Activated CD4-positive, alpha-beta T cell treated with anti-CD3 and anti-CD28 coated beads for 36 hours (primary cell): ENCODE measurements at regions of chr7 and their contacts with region 1.

Region 1: GRCh38 chr7:21427182-21427870 is 557 bp upstream of the SP4 start:
- DNase-seq: peak; percentile 99
- ATAC-seq: peak; percentile 80
- H3K4me3 Mint-ChIP-seq: peak overlapping the region; percentile 99
- H3K27ac Mint-ChIP-seq: peak overlapping the region; percentile 100
- H3K4me1 Mint-ChIP-seq: peaks cover 38% of the 10 kb centered on the region
- H3K27me3 Mint-ChIP-seq: no peaks in the 10 kb centered on the region

Region 2: GRCh38 chr7:19708397-19709248 is 1718.7 kb before region 1 on chr7 and contains the start of gene POLR1F:
- CTCF ChIA-PET with region 1: no interaction called
- POLR2A ChIA-PET with region 1: no interaction called
- intact Hi-C with region 1: loop called in 1 of 2 experiments (anchors 5 kb)
- DNase-seq: peak; percentile 96
- ATAC-seq: peak; percentile 96
- H3K4me3 Mint-ChIP-seq: peak within 1 kb of the TSS; percentile 89
- H3K27ac Mint-ChIP-seq: peak within 1 kb of the TSS; percentile 90
- H3K4me1 Mint-ChIP-seq: peaks cover 41% of the 10 kb centered on the region
- H3K27me3 Mint-ChIP-seq: no peaks in the 10 kb centered on the region
- total RNA-seq, gene POLR1F: 25.8 to 32.2 TPM

Region 3: DNA sequence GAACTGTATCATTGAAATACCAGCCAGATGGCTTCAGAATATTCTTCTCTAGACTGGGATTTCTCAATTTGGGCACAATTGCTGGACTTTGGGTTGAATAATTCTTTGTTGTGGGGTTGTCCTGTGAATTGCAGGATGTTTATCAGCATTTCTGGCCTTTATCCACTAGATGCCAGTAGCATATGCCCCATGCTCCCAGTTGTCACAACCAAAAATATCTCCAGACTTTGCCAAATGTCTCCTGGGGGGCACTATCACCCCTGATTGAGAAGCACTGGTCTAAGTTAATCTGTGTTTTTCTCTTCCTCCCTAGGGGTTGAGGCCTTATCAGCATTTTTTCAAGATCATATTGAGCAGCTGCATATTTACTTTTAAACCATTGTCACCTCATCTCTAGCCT is 435.8 kb before region 1 on chr7:
- CTCF ChIA-PET with region 1: no interaction called
- POLR2A ChIA-PET with region 1: no interaction called
- intact Hi-C with region 1: no loop called
- DNase-seq: no peak
- ATAC-seq: no peak
- H3K4me3 Mint-ChIP-seq: no peak overlapping the region
- H3K27ac Mint-ChIP-seq: no peak overlapping the region
- H3K4me1 Mint-ChIP-seq: no peaks in the 10 kb centered on the region
- H3K27me3 Mint-ChIP-seq: peaks cover 2% of the 10 kb centered on the region

Region 4: DNA sequence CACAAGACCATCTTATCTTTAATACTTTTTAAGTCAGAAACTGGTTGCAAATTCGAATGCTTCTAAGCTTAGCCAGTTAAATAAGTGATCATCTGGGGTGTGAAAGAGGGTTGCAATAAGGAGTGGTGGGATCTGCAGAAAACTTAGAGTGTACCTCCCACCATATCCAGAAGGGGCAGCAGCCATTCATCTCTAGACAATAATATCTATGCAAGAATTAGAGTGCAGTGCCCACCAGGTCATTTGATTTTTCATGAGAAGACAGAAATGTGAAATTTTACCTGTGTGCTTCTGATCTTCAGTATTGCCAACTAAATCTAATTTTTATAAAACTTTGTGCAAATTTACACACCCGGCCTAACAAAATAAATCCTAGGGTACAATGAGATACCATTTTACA is 126.6 kb before region 1 on chr7:
- CTCF ChIA-PET with region 1: interaction called, 3 read pairs
- POLR2A ChIA-PET with region 1: no interaction called
- intact Hi-C with region 1: loop called in 1 of 2 experiments (anchors 1 kb)
- DNase-seq: peak; percentile 7
- ATAC-seq: no peak
- H3K4me3 Mint-ChIP-seq: no peak overlapping the region
- H3K27ac Mint-ChIP-seq: no peak overlapping the region
- H3K4me1 Mint-ChIP-seq: peaks cover 12% of the 10 kb centered on the region
- H3K27me3 Mint-ChIP-seq: no peaks in the 10 kb centered on the region

Region 5: GRCh38 chr7:21443149-21443841 is 16.0 kb after region 1 on chr7:
- CTCF ChIA-PET with region 1: interaction called, 12 read pairs
- POLR2A ChIA-PET with region 1: interaction called, 3 read pairs
- intact Hi-C with region 1: no loop called
- DNase-seq: no peak
- ATAC-seq: no peak
- H3K4me3 Mint-ChIP-seq: no peak overlapping the region
- H3K27ac Mint-ChIP-seq: no peak overlapping the region
- H3K4me1 Mint-ChIP-seq: peaks cover 37% of the 10 kb centered on the region
- H3K27me3 Mint-ChIP-seq: no peaks in the 10 kb centered on the region

Region 6: GRCh38 chr7:21603972-21604749 is 176.8 kb after region 1 on chr7:
- CTCF ChIA-PET with region 1: no interaction called
- POLR2A ChIA-PET with region 1: no interaction called
- intact Hi-C with region 1: no loop called
- DNase-seq: no peak
- ATAC-seq: peak; percentile 66
- H3K4me3 Mint-ChIP-seq: no peak overlapping the region
- H3K27ac Mint-ChIP-seq: peak overlapping the region; percentile 17
- H3K4me1 Mint-ChIP-seq: peaks cover 8% of the 10 kb centered on the region
- H3K27me3 Mint-ChIP-seq: peaks cover 5% of the 10 kb centered on the region

Region 7: DNA sequence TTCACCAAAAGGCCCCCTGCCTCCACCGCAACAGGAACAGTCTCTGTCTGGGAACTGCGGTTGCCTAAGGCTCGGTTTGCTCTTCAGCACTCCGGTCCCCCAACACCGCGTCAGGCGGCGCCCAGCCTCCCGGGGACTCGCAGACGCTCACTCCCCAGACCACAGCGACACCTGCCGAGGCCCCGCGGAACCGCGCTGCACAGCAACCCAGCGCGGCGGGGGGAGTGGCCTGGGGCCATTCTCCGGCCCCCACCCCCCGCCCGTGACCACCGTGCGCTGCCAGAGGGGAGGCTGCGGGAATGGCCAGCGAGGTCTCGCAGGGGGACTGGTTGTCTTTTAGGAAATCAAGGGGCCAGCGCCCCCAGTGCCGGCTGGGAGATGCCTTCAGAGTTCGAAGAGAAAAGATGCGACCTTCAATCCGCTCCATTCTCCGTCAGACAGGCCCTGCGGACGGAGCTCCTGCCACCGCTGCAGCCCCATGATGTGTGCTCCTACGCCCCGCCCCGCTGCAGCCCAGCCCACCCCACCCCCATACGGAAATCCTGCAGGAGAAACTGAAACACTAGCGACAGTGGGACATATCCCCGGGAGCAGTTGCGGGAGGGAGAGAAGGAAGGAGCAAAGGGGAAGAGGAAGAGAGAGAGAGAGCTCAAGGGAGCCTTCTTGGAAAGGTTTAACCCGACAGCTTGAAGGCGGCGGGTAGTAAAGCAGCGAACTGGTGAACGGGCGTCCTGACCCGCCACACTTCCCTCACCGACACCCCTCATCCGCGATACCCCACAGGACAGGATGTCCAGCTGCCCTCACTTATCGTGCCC is 655.8 kb after region 1 on chr7:
- CTCF ChIA-PET with region 1: no interaction called
- POLR2A ChIA-PET with region 1: no interaction called
- intact Hi-C with region 1: loop called in 1 of 2 experiments (anchors 5 kb)
- DNase-seq: peak; percentile 91
- ATAC-seq: peak; percentile 99
- H3K4me3 Mint-ChIP-seq: peak overlapping the region; percentile 71
- H3K27ac Mint-ChIP-seq: no peak overlapping the region
- H3K4me1 Mint-ChIP-seq: peaks cover 10% of the 10 kb centered on the region
- H3K27me3 Mint-ChIP-seq: peaks cover 11% of the 10 kb centered on the region

Region 8: GRCh38 chr7:23181684-23182553 is 1754.6 kb after region 1 on chr7 and contains the start of gene NUP42:
- CTCF ChIA-PET with region 1: no interaction called
- POLR2A ChIA-PET with region 1: no interaction called
- intact Hi-C with region 1: loop called in 1 of 2 experiments (anchors 5 kb)
- DNase-seq: peak; percentile 98
- ATAC-seq: peak; percentile 98
- H3K4me3 Mint-ChIP-seq: peak within 1 kb of the TSS; percentile 88
- H3K27ac Mint-ChIP-seq: peak within 1 kb of the TSS; percentile 97
- H3K4me1 Mint-ChIP-seq: peaks cover 30% of the 10 kb centered on the region
- H3K27me3 Mint-ChIP-seq: no peaks in the 10 kb centered on the region
- total RNA-seq, gene NUP42: 32.3 to 44.8 TPM